Activated naive CD8-positive, alpha-beta T cell treated with anti-CD3 and anti-CD28 coated beads, Interleukin-2, amount 10 ng/mL, durations not matched to agents 7 days and 5 days (primary cell): ENCODE measurements at regions of chr20 and their contacts with region 1.

Region 1: DNA sequence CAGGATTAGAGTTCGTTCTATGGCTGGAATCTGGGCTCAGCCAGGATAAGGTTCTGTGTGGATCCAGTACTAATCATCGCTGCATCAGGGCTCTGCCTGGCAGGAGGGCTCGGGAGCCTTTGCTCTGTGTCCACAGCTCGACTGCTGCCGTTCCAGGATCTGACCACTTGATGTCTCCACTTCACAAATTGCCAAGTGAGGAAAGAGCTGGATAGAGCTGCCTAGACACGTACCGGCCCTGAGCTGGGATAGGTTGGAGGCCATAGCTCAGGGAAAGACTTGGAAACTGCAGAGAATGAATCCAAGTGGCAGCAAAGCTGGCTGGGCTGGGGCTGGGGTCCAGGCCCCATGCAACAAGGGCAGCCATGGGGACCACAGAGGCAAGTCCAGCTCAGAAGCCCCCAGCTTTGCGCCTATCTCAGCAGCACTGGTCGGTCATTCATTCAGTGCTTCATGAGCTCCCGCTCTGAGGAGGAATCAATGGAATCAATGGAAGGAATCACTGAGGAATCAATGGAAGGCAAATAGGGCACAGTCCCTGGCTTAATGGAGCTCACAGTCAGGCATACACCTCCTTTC is 38.0 kb upstream of the TOP1 start:
- DNase-seq: peak; percentile 70
- ATAC-seq: peak; percentile 82
- H3K4me3 Mint-ChIP-seq: peak overlapping the region; percentile 71
- H3K27ac Mint-ChIP-seq: peak overlapping the region; percentile 87
- H3K4me1 Mint-ChIP-seq: peaks cover 49% of the 10 kb centered on the region
- H3K27me3 Mint-ChIP-seq: no peaks in the 10 kb centered on the region

Region 2: DNA sequence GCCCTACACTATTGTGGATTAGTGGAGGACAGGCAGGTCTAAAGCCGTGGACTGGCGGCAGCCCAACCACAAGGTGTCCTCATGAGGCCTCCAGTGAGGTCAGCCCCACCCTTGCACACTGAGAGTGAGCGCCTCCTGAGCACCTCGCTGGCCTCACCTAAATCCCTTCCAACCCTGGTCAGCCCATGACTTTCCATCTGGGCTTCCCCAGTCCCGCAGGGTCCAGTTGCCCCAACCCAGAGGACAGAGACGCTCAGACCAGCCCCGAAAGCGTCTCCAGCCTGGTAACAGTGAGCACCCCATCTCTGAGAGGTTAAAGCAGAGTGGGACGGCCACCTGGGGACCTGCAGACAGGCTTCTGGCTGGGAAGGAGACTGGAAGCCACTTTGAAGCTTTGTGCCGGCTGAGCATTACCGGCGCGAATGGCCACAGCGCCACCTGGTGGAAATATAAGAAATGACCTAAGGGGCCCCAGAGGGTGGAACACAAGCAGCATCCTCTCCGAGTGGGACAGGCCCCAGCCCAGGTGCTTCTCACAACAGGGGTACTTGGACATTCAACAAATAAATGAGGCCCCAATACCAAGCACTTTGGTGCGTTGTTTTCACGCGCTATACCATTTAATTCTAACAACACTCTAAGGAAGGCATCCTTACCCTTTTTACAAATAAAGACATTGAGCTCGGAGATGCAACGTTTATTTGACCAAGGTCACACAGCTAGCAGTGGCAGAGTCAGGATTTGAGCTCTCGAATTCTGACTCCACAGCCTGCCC is 27.7 kb before region 1 on chr20:
- POLR2A ChIA-PET with region 1: no interaction called
- DNase-seq: peak; percentile 79
- ATAC-seq: peak; percentile 86
- H3K4me3 Mint-ChIP-seq: no peak overlapping the region
- H3K27ac Mint-ChIP-seq: no peak overlapping the region
- H3K4me1 Mint-ChIP-seq: peaks cover 11% of the 10 kb centered on the region
- H3K27me3 Mint-ChIP-seq: peaks cover 9% of the 10 kb centered on the region

Region 3: DNA sequence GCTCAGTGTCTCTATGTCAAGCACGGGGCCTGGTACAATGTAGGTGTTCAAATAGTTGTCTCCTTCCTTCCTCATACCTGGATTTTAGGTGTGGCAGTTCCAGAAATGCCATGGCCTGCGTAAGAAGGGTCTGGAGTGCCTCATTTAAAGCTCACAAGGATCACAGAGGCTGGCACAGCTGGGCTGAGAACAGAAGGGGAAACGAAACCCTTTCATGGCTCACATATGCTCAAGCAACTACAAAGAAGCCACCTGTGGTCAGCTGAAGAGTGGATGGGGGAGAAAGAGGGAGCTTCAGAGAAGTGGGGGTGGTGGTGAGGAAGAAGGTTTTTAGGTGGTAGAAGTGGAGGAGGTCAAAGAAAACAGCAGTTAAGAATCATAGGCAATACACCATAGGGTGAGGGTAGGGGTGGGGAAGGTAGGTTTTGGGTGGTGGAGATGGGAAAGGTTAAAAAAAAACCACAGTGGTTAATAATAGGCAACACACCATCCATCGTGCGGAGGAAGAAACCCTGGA is 21.0 kb after region 1 on chr20:
- POLR2A ChIA-PET with region 1: interaction called, 55 read pairs
- DNase-seq: no peak
- ATAC-seq: peak; percentile 88
- H3K4me3 Mint-ChIP-seq: peak overlapping the region; percentile 64
- H3K27ac Mint-ChIP-seq: peak overlapping the region; percentile 92
- H3K4me1 Mint-ChIP-seq: peaks cover 54% of the 10 kb centered on the region
- H3K27me3 Mint-ChIP-seq: no peaks in the 10 kb centered on the region

Region 4: GRCh38 chr20:41028348-41029148 is 37.9 kb after region 1 on chr20 and contains the start of gene TOP1:
- POLR2A ChIA-PET with region 1: interaction called, 22 read pairs
- DNase-seq: peak; percentile 99
- ATAC-seq: peak; percentile 96
- H3K4me3 Mint-ChIP-seq: peak within 1 kb of the TSS; percentile 82
- H3K27ac Mint-ChIP-seq: peak within 1 kb of the TSS; percentile 87
- H3K4me1 Mint-ChIP-seq: peaks cover 41% of the 10 kb centered on the region
- H3K27me3 Mint-ChIP-seq: no peaks in the 10 kb centered on the region
- total RNA-seq, gene TOP1: 72.6 to 75.2 TPM

Region 5: GRCh38 chr20:41038878-41039404 is 48.3 kb after region 1 on chr20:
- POLR2A ChIA-PET with region 1: interaction called, 13 read pairs
- DNase-seq: no peak
- ATAC-seq: peak; percentile 51
- H3K4me3 Mint-ChIP-seq: peak overlapping the region; percentile 29
- H3K27ac Mint-ChIP-seq: peak overlapping the region; percentile 60
- H3K4me1 Mint-ChIP-seq: peaks cover 69% of the 10 kb centered on the region
- H3K27me3 Mint-ChIP-seq: no peaks in the 10 kb centered on the region

Region 6: GRCh38 chr20:41047975-41048305 is 57.3 kb after region 1 on chr20:
- POLR2A ChIA-PET with region 1: interaction called, 19 read pairs
- DNase-seq: no peak
- ATAC-seq: peak; percentile 32
- H3K4me3 Mint-ChIP-seq: peak overlapping the region; percentile 87
- H3K27ac Mint-ChIP-seq: peak overlapping the region; percentile 96
- H3K4me1 Mint-ChIP-seq: peaks cover 75% of the 10 kb centered on the region
- H3K27me3 Mint-ChIP-seq: no peaks in the 10 kb centered on the region

Region 7: GRCh38 chr20:41095110-41095969 is 104.7 kb after region 1 on chr20:
- POLR2A ChIA-PET with region 1: interaction called, 12 read pairs
- DNase-seq: peak; percentile 53
- ATAC-seq: peak; percentile 73
- H3K4me3 Mint-ChIP-seq: no peak overlapping the region
- H3K27ac Mint-ChIP-seq: no peak overlapping the region
- H3K4me1 Mint-ChIP-seq: peaks cover 7% of the 10 kb centered on the region
- H3K27me3 Mint-ChIP-seq: no peaks in the 10 kb centered on the region

Region 8: DNA sequence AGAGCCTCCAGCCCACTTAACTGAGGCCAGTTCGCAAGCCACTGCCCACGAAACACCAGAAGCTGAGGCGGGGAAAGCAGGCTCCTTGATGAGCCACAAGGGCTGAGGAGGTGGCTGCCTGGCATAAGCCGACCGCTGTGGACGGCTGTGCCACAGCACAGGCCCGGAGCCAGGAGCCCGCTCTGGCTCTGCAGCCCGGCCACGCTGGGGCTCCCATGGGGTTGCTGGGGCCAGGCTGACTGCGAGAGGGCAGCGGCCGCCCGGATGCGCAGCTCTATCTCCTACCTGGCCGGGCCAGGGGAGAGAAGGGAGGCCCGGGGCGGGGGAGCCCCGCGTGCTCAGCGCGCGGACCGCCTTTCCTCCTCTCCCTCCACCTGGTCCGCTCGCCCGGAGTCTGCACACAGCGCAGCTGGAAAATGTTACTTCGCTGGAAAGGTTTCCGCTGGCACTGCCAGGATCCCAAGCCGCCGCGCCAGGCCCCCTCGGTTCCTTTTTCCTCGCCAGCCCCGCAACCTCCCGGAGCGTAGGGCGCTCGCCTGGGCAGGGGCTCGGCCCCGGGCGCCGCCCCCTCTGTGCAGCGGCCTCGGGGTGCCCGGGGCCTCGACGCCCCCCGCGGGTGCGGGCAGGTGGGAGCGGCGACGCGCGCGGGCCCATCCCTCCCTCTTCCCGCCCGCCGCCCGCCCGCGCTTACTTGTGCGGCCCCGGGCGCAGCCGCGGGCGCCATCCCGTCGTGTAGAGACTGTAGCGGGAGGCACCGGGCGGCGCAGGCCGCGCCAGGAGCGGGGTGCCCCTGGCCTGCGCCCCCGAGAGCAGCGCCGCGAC is 375.4 kb after region 1 on chr20:
- POLR2A ChIA-PET with region 1: no interaction called
- DNase-seq: no peak
- ATAC-seq: peak; percentile 44
- H3K4me3 Mint-ChIP-seq: peak overlapping the region; percentile 25
- H3K27ac Mint-ChIP-seq: no peak overlapping the region
- H3K4me1 Mint-ChIP-seq: no peaks in the 10 kb centered on the region
- H3K27me3 Mint-ChIP-seq: peaks cover 43% of the 10 kb centered on the region